SK-N-SH (cell line): ENCODE measurements at regions of chr11 and their contacts with region 1.

Region 1: GRCh38 chr11:116420770-116421528 is 351.8 kb downstream of the BUD13 start:
- DNase-seq: no peak
- H3K4me3 ChIP-seq: no peak overlapping the region
- H3K27ac ChIP-seq: peak overlapping the region in 1 of 2 experiments; percentile 100; a peak in 2 of 4 replicates
- H3K4me1 ChIP-seq: peaks cover 0 to 71% of the 10 kb centered on the region in 2 experiments; a peak in 2 of 4 replicates
- H3K27me3 ChIP-seq: no peaks in the 10 kb centered on the region
- CTCF ChIP-seq: no peak
- EP300 ChIP-seq: no peak
- RAD21 ChIP-seq: no peak

Region 2: GRCh38 chr11:116397602-116398084 is 23.3 kb before region 1 on chr11:
- CTCF ChIA-PET with region 1: interaction called, 13 read pairs
- POLR2A ChIA-PET with region 1: interaction called, 4 read pairs
- DNase-seq: no peak
- H3K4me3 ChIP-seq: no peak overlapping the region
- H3K27ac ChIP-seq: peak overlapping the region in 1 of 2 experiments; percentile 87; a peak in 2 of 4 replicates
- H3K4me1 ChIP-seq: peaks cover 0 to 35% of the 10 kb centered on the region in 2 experiments; a peak in 1 of 4 replicates
- H3K27me3 ChIP-seq: no peaks in the 10 kb centered on the region
- CTCF ChIP-seq: no peak
- EP300 ChIP-seq: no peak
- RAD21 ChIP-seq: no peak